ENCODE measurements at regions of chr7 and their contacts with region 1.

Region 1: DNA sequence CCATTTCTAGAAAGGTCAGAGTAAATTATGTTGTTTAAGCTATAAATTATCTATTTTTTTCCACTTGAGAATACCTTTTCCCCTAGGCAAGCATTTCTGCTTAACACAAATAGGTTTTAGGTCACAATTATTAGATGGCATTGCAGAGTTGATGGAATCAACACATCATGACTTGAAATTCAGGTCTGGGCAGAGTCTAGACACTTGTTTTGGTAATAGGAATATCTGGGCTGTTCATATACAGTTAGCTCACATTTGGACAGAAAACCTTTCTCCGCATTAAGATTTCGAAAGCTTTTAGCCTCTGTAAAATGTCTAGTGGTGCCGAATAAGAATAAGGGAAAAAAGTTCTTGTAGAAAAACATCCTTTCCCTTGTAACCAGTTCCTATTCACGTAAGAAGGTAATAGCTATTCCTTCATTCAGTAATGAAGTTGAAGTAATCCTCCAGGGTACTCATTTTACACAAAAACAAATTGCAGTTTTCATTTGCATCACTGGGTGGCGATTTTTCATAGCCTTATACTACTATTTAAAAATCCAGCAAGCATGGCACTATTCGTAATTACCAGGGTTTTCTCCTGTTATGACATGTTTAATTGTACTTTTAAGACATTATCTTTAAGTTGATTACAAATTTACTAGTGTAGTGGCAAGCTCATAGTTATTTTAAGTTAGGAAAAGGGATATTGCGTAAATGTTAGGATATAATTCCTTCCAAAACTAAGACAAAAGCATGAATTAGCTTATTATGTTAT is 37.0 kb downstream of the RPA3 start:
- H3K4me3 ChIP-seq: no peak overlapping the region
- H3K27ac ChIP-seq: no peak overlapping the region
- H3K4me1 ChIP-seq: peaks cover 6% of the 10 kb centered on the region; the same call in 1 of the 2 replicates
- CTCF ChIP-seq: no peak

Region 2: DNA sequence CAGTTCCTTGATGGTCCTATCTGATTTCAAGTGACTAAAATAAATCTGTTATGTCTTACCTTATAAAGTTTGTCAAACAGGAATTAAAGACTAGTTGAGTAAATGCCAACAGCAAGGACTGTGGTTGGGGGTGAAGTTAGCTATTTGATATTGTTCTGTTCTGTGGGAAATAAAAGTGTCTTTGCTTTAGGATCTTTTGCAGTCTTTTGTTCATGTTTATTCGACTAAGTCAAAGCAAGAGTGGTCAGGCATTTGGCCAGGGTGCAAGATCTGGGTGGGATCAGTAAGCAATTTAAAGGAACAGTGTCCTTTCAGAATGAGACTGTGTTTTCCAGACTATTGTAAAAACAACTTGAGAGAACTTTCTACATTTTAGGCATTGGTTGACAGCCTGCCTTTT is 145.7 kb before region 1 on chr7 and contains the start of gene COL28A1:
- CTCF ChIA-PET with region 1: no interaction called
- POLR2A ChIA-PET with region 1: no interaction called
- H3K4me3 ChIP-seq: no peak within 1 kb of the TSS
- H3K27ac ChIP-seq: no peak within 1 kb of the TSS
- H3K4me1 ChIP-seq: no peaks in the 10 kb centered on the region
- CTCF ChIP-seq: no peak

Region 3: DNA sequence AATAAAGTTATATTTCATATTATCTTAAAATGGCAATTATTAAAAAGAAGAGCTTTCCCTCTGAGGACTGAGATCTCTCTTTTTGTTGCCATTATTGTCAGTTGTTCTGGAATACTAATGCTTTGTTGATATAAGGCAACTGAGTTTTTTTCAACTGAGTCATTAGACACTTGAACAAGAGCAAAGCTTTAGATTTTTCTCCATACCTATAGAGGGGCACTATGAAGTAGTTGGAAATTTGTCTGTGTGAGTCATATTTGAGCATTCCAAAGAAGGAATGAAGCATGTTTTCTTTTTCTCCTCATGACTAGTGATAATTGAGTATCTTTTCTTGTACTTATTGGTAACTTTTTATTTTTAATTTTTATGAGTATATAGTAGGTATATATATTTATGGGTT is 12.5 kb after region 1 on chr7:
- CTCF ChIA-PET with region 1: interaction called, 19 read pairs
- POLR2A ChIA-PET with region 1: no interaction called
- H3K4me3 ChIP-seq: no peak overlapping the region
- H3K27ac ChIP-seq: no peak overlapping the region
- H3K4me1 ChIP-seq: peaks cover 10% of the 10 kb centered on the region
- CTCF ChIP-seq: no peak

Region 4: GRCh38 chr7:7702826-7703225 is 21.5 kb after region 1 on chr7:
- CTCF ChIA-PET with region 1: interaction called, 10 read pairs
- POLR2A ChIA-PET with region 1: no interaction called
- H3K4me3 ChIP-seq: no peak overlapping the region
- H3K27ac ChIP-seq: no peak overlapping the region
- H3K4me1 ChIP-seq: peaks cover 4% of the 10 kb centered on the region
- CTCF ChIP-seq: no peak

Region 5: GRCh38 chr7:7719236-7719635 is 37.9 kb after region 1 on chr7:
- CTCF ChIA-PET with region 1: interaction called, 15 read pairs
- POLR2A ChIA-PET with region 1: no interaction called
- H3K4me3 ChIP-seq: no peak overlapping the region
- H3K27ac ChIP-seq: no peak overlapping the region
- H3K4me1 ChIP-seq: peaks cover 14% of the 10 kb centered on the region
- CTCF ChIP-seq: no peak

Region 6: GRCh38 chr7:7761340-7761980 is 80.1 kb after region 1 on chr7:
- CTCF ChIA-PET with region 1: interaction called, 16 read pairs
- POLR2A ChIA-PET with region 1: no interaction called
- H3K4me3 ChIP-seq: no peak overlapping the region
- H3K27ac ChIP-seq: no peak overlapping the region
- H3K4me1 ChIP-seq: peaks cover 13% of the 10 kb centered on the region; the same call in 1 of the 2 replicates
- CTCF ChIP-seq: no peak

Region 7: DNA sequence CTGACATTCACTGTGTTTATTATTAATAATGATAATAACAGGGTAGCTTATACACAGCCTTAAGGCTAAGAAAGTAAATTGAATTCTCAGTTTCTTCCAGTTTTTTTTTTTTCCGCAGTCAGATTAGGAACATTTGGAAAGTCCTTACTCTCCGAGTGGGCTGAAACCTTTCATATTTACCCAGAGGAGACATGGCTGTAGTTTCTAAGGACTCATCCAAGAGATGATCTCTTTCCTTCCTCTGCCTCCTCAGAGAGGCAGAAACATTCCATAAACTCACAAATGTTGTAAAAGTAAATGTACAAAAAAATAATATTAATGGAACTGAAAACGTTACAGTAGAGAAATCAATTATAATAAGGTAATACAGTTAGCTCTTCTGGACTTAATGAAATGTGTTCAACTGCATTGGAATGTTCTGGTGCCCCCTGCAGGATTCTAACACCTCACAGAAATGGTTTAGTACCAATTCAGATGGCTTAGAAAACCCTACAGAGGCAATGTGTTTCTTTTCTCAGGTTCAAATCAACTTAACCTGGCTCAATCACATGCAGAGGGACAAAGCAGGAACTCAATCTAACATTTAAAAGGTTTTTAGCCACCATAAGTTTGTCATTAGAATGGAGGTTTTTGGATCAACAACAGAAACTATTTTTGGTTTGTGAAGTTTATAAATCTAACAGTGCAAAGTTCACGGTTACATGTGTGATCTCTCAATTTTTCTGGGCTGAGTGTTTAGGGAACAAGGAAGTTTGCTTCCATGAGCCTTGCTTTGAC is 508.9 kb after region 1 on chr7:
- CTCF ChIA-PET with region 1: interaction called, 11 read pairs
- POLR2A ChIA-PET with region 1: no interaction called
- H3K4me3 ChIP-seq: no peak overlapping the region
- H3K27ac ChIP-seq: no peak overlapping the region
- H3K4me1 ChIP-seq: no peaks in the 10 kb centered on the region
- CTCF ChIP-seq: no peak

Region 8: DNA sequence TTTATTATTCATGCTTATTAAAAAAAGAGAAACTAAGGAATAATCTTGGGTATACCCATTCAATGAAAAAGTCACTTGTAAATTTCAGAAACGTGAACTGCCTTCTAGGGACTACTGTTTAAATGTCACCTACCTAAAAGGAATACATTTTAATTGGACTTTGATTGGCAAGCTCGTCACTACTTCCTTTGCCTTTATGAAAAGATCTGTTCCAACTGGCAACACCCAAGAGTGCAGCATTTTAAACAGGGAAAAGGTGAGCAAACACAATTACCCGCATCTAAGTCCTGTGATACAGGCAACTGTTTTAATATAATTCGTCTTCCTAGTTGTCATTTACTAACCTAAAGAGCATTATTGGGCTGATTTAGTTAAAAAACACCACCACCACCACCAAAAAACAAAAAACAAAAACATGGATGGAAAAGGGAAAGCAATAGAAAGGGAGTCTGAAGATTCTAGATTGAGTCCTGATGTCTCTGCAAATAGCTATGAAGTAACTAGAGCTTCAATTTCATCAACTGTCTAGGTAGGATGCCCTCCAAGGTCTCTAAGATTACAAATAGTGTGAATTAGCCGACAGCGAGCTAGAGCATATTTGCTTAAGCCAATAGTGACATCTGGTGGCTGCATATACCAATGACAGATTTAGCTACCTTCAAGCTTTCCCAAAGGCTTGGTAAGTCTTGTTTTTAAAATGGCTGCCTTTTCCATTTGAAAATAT is 614.4 kb after region 1 on chr7:
- CTCF ChIA-PET with region 1: interaction called, 10 read pairs
- POLR2A ChIA-PET with region 1: no interaction called
- H3K4me3 ChIP-seq: no peak overlapping the region
- H3K27ac ChIP-seq: no peak overlapping the region
- H3K4me1 ChIP-seq: peaks cover 8% of the 10 kb centered on the region
- CTCF ChIP-seq: 0 out of 2 replicates have a peak, but pooled peaks have one; percentile 35